Activated T-helper 2 cell treated with anti-CD3 and anti-CD28 coated beads, Interferon-gamma antibody, Interleukin-2, Interleukin-4, amounts not matched to agents 10 μg/mL and 5 μg/mL and 100 μg/mL, durations not matched to agents 14 hours and 24 hours and 36 hours (primary cell): ENCODE measurements at regions of chr11 and their contacts with region 1.

Region 1: GRCh38 chr11:119262668-119263351 is 54.1 kb downstream of the MCAM start:
- DNase-seq: no peak
- H3K4me3 Mint-ChIP-seq: no peak overlapping the region
- H3K27ac Mint-ChIP-seq: no peak overlapping the region
- H3K4me1 Mint-ChIP-seq: peaks cover 52% of the 10 kb centered on the region
- H3K27me3 Mint-ChIP-seq: no peaks in the 10 kb centered on the region

Region 2: GRCh38 chr11:119175493-119176077 is 87.2 kb before region 1 on chr11:
- intact Hi-C with region 1: no loop called
- DNase-seq: no peak
- H3K4me3 Mint-ChIP-seq: no peak overlapping the region
- H3K27ac Mint-ChIP-seq: no peak overlapping the region
- H3K4me1 Mint-ChIP-seq: peaks cover 17% of the 10 kb centered on the region
- H3K27me3 Mint-ChIP-seq: no peaks in the 10 kb centered on the region

Region 3: DNA sequence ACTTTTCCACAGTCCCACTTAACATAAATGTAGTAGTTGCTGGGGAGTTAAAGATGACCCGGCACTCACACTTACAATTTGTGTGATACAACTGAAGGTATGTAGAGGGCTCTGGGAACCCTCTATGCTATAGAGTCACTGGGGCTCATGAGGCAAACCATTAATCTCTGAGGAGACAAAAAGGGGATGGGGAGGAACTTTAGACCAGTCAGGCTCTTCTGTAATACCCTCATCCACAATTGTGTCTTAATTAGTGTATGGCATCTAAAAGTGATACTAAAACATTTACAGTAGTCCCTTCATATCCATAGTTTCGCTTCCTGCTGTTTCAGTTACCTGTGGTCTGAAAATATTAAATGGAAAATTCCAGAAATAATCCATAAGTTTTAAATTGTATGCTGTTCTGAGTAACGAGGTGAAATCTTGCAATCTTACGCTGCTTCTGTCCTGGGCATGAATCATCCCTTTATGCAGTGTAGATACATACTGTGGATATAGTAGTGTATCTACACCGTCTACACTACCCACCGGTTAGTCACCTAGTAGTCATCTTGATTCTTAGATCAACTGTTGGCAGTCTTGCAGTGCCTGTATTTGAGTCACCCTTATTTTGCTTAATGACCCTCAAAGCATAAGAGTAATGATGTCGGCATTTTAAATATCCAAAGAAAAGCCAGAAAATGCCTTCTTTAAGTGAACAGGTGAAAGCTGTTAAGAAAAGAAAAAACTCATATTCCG is 44.5 kb before region 1 on chr11:
- intact Hi-C with region 1: loop called (anchors 1 kb)
- DNase-seq: no peak
- H3K4me3 Mint-ChIP-seq: no peak overlapping the region
- H3K27ac Mint-ChIP-seq: peak overlapping the region; percentile 69
- H3K4me1 Mint-ChIP-seq: peaks cover 29% of the 10 kb centered on the region
- H3K27me3 Mint-ChIP-seq: no peaks in the 10 kb centered on the region

Region 4: GRCh38 chr11:119236490-119236889 is 26.3 kb before region 1 on chr11:
- intact Hi-C with region 1: loop called (anchors 1 kb)
- DNase-seq: no peak
- H3K4me3 Mint-ChIP-seq: peak overlapping the region; percentile 4
- H3K27ac Mint-ChIP-seq: peak overlapping the region; percentile 87
- H3K4me1 Mint-ChIP-seq: peaks cover 43% of the 10 kb centered on the region
- H3K27me3 Mint-ChIP-seq: no peaks in the 10 kb centered on the region

Region 5: DNA sequence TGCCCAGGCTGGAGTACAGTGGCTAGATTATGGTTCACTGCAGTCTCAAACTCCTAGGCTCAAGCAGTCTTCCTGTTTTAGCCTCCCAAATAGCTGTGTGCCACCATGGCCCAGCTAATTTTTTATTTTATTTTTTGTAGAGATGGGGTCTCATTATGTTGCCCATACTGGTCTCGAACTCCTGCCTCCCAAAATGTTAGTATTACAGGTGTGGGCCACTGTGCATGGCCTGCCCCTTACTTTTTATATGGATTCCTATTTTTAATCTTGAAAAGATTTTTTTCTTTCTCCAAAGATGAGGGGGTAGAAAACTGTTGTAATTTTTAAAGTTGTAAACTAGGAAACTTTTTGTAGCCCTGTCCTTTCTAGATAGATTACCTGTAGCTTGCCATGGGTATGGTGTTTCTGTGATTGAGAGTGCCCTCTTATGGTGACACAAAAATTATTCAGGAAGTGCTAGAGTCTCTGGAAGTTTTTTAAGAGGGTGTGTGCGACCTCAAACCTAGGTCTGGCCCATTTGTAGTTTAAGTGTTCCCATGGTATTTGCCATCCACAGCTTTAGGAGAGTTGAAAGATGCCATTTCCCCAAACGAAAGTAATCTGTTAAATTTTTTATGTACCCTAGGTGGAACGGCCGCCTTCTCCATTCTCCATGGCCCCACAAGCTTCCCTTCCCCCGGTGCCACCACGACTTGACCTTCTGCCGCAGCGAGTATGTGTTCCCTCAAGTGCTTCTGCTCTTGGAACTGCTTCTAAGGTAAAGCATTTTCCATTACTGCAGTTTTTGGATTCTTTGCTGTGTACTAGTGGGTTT is 21.7 kb after region 1 on chr11:
- intact Hi-C with region 1: loop called (anchors 2 kb)
- DNase-seq: no peak
- H3K4me3 Mint-ChIP-seq: no peak overlapping the region
- H3K27ac Mint-ChIP-seq: peak overlapping the region; percentile 30
- H3K4me1 Mint-ChIP-seq: peaks cover 25% of the 10 kb centered on the region
- H3K27me3 Mint-ChIP-seq: no peaks in the 10 kb centered on the region

Region 6: DNA sequence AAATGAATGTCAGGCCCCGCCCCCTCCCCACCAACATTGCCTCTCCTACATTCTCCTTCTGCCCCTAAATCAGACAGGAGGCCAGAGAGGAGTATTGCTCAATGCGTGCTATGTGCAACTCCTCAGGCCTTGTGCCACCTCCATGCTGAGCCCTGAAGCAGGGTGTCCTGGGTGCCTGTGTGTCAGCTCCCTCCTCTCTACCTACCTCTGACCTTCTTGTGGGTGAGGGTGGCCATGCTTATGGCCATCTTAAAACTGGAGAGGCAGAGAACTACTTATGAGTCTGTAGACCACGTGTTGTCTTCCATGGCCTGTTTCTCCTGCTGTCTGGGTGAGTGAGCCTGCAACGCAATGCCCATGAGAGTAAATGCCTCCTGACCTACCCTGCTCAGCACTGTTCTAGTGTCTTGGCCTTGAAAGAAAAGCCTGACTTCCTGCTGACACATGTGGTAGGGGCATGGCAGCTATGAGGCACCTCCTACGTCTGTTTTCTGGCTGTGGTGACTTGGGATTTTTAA is 43.6 kb after region 1 on chr11:
- intact Hi-C with region 1: loop called (anchors 2 kb)
- DNase-seq: no peak
- H3K4me3 Mint-ChIP-seq: peak overlapping the region; percentile 31
- H3K27ac Mint-ChIP-seq: peak overlapping the region; percentile 92
- H3K4me1 Mint-ChIP-seq: peaks cover 24% of the 10 kb centered on the region
- H3K27me3 Mint-ChIP-seq: no peaks in the 10 kb centered on the region

Region 7: GRCh38 chr11:119334174-119334930 is 71.5 kb after region 1 on chr11 and contains the start of gene RNF26:
- intact Hi-C with region 1: loop called (anchors 5 kb)
- DNase-seq: peak; percentile 93
- H3K4me3 Mint-ChIP-seq: peak within 1 kb of the TSS; percentile 100
- H3K27ac Mint-ChIP-seq: peak within 1 kb of the TSS; percentile 99
- H3K4me1 Mint-ChIP-seq: peaks cover 40% of the 10 kb centered on the region
- H3K27me3 Mint-ChIP-seq: peaks cover 22% of the 10 kb centered on the region
- total RNA-seq, gene RNF26: 29.9 and 32.6 TPM in 2 replicates

Region 8: GRCh38 chr11:119450590-119451326 is 187.9 kb after region 1 on chr11:
- intact Hi-C with region 1: no loop called
- DNase-seq: no peak
- H3K4me3 Mint-ChIP-seq: no peak overlapping the region
- H3K27ac Mint-ChIP-seq: no peak overlapping the region
- H3K4me1 Mint-ChIP-seq: no peaks in the 10 kb centered on the region
- H3K27me3 Mint-ChIP-seq: peaks cover 7% of the 10 kb centered on the region